Posterior cingulate gyrus (tissue), 11 donors: ENCODE measurements at regions of chr15 and their contacts with region 1.

Region 1: DNA sequence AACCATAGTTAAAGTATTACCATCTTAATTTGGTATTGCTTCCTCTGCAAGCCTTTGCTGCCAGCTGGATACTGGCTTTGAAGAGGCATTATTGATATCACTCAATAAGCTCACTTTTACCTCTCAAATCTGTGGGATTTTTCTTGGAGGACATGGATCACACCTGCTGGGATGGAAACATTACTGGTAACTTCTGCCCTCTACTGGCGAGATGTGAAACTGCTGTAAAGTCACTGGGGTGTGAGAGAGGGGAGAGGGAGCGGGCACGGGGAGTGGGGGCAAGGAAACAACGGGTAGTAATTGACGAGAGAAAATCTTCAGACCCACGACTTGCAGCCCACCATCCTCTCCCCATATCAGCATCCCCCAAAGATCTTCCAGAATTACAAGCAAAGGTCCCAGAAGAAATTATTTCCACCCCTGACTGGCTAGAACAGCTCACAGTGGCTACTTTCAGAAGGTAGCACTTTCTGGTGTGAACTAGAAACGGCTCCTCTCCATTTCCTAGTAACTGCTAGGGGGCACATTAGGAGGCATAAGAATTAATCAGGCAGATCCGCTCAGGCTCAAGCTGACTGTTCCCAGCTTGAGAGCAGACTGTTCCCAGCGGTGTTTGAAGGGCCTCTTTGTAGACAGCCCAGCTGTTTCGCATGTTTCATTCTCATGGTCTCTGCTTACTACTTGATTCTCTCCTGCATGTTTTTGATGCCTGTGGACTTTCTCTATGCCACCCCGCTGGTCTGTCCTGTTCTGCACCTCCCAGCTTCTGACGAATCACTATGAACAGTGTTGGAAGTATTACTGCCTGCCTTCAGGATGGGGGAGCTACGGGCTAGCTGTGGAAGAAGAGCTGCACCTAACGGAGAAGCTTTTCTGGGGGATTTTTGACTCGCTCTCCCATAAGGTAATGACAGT is 230.4 kb upstream of the CHRM5 start:
- DNase-seq: peak in 3 of 10 donors; percentile 44 to 61 (median 49)

Region 2: DNA sequence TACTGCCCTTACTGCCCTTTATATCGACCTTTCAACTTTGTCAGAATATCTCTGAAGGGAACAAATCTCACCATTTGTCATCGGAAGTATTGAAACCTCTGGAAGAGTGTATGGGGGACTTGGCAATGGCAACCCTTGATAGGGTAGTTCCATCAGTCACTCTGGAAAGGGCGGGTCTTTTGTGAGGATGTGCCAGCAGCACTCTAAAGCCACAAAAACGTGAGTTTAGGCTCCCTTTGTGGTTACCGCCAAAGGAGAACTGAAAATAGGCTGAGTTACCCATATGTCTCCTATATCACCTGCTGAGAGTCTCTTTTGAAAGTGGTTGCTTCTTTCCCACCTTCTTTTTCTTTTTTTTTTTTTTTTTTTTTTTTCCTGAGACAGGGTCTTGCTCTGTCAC is 66.5 kb before region 1 on chr15:
- intact Hi-C with region 1: no loop called
- DNase-seq: no peak

Region 3: DNA sequence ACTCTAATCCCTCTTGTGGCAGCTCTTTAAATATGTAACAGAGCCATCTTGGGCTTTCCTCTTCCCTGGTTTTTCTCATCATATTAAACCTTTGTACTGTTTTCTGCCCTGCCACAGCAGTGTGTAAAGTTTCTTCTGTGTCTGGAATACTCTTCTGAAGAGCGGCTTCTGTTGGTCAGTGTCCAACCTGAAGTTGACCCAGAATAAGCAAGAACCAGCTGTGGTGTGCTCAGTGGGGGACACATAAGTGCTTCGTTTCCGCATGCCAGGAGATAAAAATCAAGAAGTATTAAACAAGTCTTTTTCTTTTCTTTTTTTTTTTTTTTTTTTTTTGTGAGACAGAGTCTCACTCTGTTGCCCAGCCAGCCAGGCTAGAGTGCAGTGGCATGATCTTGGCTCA is 57.1 kb after region 1 on chr15:
- intact Hi-C with region 1: no loop called
- DNase-seq: no peak

Region 4: DNA sequence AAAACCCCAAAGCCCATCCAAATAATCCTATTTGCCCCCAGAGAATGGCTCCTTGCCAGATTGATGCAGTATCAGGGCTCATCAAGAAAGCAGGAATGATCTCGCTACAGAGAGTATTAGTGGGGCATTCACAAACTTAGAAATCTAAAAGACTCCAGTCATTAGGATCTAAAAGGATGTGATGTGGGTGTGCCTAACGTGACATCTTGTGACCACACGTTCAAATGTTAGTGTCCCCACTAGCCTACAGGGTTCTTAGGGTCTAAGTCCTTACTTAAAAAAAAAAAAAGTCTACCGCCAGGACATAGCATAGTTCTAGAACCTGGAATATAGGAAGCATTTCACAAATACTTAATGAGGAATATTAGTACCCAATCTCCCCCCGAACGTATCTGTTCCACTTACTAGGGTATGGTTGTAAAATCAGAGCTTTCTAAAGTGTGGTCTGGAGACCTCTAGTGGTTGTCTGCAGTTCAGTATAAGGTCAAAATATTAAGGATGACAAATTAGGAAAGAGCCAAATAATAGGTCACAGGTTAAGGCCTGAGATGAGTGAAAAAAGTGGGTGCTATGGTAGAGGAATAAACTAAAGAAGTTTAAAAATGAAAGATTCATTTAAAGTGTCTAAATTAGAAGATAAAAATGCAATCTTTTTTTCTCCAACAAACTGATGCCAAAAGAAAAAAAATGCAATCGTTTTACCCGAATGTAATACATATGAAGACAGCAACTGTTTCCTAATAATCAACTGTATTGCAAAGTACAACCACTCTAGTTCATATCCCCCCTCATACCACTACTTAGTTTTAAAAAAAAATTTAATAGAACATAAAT is 226.1 kb after region 1 on chr15:
- intact Hi-C with region 1: loop called (anchors 5 kb)
- DNase-seq: no peak